OCI-LY7 (cell line): ENCODE measurements at regions of chr7 and their contacts with region 1.

Region 1: GRCh38 chr7:90403174-90404113 is at the start of gene CLDN12:
- DNase-seq: peak; percentile 82
- H3K4me3 ChIP-seq: peak within 1 kb of the TSS; percentile 80
- H3K27ac ChIP-seq: peak within 1 kb of the TSS; percentile 37
- H3K4me1 ChIP-seq: peaks cover 5% of the 10 kb centered on the region
- CTCF ChIP-seq: no peak
- total RNA-seq, gene CLDN12: 8.2 and 11.0 TPM in 2 replicates

Region 2: DNA sequence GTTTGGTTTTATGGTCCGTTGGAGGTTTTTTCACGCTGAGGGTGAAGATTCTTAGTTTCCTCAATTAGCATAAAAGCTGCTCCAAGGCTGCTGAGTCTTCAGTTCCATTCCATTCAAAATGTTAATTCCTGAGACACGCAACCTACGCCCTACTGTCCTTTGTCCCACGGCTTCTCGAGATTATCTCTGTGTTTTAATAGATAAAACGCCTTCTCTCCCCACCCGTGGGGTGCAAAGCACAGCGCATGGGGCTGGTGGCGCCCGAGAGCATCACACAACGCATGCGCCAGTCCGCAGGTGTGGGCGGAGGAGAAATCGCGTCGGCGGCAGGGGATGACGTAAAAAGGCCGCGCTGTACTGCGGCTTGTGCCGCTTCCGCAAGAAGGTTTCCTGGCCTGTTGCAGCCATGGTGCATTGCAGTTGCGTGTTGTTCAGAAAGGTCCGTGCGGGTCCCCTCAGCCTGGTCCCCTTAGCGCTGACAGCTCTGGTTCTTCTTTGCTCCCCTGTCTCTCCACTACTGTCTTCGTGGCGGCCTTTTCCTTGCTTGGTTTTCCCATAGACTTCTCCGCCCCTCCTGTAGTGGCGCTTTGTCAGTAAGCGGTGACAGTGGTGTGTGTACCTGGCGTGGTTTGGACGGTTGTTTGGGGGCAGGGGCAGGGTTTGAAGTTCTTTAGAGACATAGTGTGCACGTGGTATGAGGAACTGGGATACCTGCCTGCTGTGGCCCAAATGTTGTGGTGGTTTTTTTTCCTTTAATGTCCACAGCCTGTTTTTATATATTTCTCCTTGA is 56.9 kb before region 1 on chr7 and contains the start of gene GTPBP10:
- CTCF ChIA-PET with region 1: interaction called, 3 read pairs
- POLR2A ChIA-PET with region 1: no interaction called
- intact Hi-C with region 1: loop called (anchors 1 kb)
- DNase-seq: peak; percentile 97
- H3K4me3 ChIP-seq: peak within 1 kb of the TSS; percentile 84
- H3K27ac ChIP-seq: peak within 1 kb of the TSS; percentile 79
- H3K4me1 ChIP-seq: peaks cover 20% of the 10 kb centered on the region
- CTCF ChIP-seq: peak; percentile 81
- total RNA-seq, gene GTPBP10: 13.1 and 16.5 TPM in 2 replicates

Region 3: DNA sequence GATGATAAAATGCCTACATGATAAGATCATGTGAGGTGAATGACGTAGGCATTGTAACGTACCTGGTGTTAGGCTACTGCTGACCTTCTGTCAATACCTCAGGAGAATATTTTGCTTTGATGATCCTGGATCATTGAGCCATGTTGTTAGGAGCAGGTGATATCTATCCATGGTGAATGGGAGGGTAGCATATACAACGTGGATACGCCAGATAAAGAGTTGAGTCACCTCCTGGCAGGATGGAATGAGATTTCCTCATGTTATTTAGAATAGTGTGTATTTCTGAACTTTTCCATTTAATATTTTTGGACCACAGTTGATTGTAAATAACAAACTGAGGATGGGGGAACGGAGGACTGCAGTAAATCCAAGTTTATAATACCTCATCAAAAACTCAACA is 12.0 kb before region 1 on chr7:
- CTCF ChIA-PET with region 1: no interaction called
- POLR2A ChIA-PET with region 1: interaction called, 17 read pairs
- intact Hi-C with region 1: no loop called
- DNase-seq: no peak
- H3K4me3 ChIP-seq: no peak overlapping the region
- H3K27ac ChIP-seq: no peak overlapping the region
- H3K4me1 ChIP-seq: no peaks in the 10 kb centered on the region
- CTCF ChIP-seq: no peak